ENCODE measurements at regions of chr1 and their contacts with region 1.

Region 1: GRCh38 chr1:161282991-161283390 is 24.4 kb downstream of the PCP4L1 start:
- DNase-seq: no peak
- H3K4me3 ChIP-seq: no peak overlapping the region
- H3K27ac ChIP-seq: no peak overlapping the region
- H3K4me1 ChIP-seq: no peaks in the 10 kb centered on the region
- H3K27me3 ChIP-seq: no peaks in the 10 kb centered on the region
- CTCF ChIP-seq: no peak
- EP300 ChIP-seq: no peak
- POLR2A ChIP-seq: no peak

Region 2: GRCh38 chr1:161242313-161242712 is 40.7 kb before region 1 on chr1:
- intact Hi-C with region 1: loop called (anchors 5 kb)
- DNase-seq: no peak
- H3K4me3 ChIP-seq: no peak overlapping the region
- H3K27ac ChIP-seq: no peak overlapping the region
- H3K4me1 ChIP-seq: no peaks in the 10 kb centered on the region
- H3K27me3 ChIP-seq: no peaks in the 10 kb centered on the region
- CTCF ChIP-seq: no peak
- EP300 ChIP-seq: no peak
- POLR2A ChIP-seq: no peak

Region 3: GRCh38 chr1:161314201-161314981 is 31.4 kb after region 1 on chr1 and contains the start of gene SDHC:
- intact Hi-C with region 1: no loop called
- DNase-seq: peak; percentile 97
- H3K4me3 ChIP-seq: peak within 1 kb of the TSS; percentile 76 to 87 (median 84)
- H3K27ac ChIP-seq: peak within 1 kb of the TSS; percentile 91 to 94 (median 92)
- H3K4me1 ChIP-seq: peaks cover 19 to 28% (median 23%) of the 10 kb centered on the region in 4 donors
- H3K27me3 ChIP-seq: peaks cover 0 to 8% (median 0%) of the 10 kb centered on the region in 4 donors
- CTCF ChIP-seq: peak in 1 of 3 experiments; percentile 12
- EP300 ChIP-seq: no peak
- POLR2A ChIP-seq: peak; percentile 79
- total RNA-seq, gene SDHC: 18.7 to 64.8 (median 30.1) TPM

Measured in esophagus muscularis mucosa (tissue), 4 donors.